MCF 10A (cell line): ENCODE measurements at regions of chr12 and their contacts with region 1.

Region 1: DNA sequence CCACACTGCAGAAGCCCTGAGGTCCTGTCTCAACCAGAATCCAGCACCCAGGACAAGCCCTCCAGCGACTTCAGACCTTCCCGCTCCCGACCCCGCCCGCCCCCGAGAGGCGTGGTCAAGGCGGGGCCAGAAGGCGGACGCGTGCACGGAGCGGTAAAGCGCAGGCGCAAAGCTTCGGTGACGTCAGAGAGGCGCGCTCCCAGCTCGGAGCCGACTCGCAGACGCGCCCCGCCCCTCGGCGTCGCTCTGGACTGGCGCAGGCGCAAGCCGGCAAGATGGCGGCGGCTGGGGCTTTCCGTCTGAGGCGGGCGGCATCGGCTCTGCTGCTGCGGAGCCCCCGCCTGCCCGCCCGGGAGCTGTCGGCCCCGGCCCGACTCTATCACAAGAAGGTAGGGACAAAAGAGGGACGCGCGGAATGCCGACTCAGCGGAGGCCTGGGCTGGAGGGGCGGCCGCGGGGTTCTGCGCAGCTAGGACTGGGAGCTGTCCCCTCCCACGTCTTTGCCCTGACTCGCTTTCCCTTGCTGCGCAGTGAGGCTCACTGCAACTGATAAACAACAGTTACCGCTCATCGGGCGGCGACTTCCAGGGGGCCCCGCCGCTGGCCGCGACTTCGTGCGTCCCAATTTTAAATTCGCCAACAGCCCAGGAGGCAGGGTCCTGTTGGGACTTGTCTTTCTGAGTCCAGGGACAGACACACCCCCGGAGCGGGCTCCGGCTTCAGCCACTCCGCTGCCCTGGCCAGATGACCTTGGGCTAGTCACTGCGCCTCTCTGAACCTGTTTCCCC is at the start of gene ISCU:
- DNase-seq: peak; percentile 98
- H3K4me3 Mint-ChIP-seq: peak within 1 kb of the TSS; percentile 96
- H3K27ac Mint-ChIP-seq: peak within 1 kb of the TSS; percentile 99
- H3K4me1 Mint-ChIP-seq: peaks cover 22% of the 10 kb centered on the region
- H3K27me3 Mint-ChIP-seq: no peaks in the 10 kb centered on the region
- CTCF ChIP-seq: no peak
- total RNA-seq, gene ISCU: 115 and 125 TPM in 2 replicates

Region 2: GRCh38 chr12:108612788-108613282 is 50.3 kb after region 1 on chr12:
- CTCF ChIA-PET with region 1: interaction called, 274 read pairs
- POLR2A ChIA-PET with region 1: interaction called, 105 read pairs
- intact Hi-C with region 1: loop called (anchors 1 kb)
- DNase-seq: peak; percentile 37
- H3K4me3 Mint-ChIP-seq: no peak overlapping the region
- H3K27ac Mint-ChIP-seq: no peak overlapping the region
- H3K4me1 Mint-ChIP-seq: peaks cover 6% of the 10 kb centered on the region
- H3K27me3 Mint-ChIP-seq: no peaks in the 10 kb centered on the region
- CTCF ChIP-seq: no peak

Region 3: GRCh38 chr12:108633534-108634248 is 71.1 kb after region 1 on chr12 and contains the start of gene SELPLG:
- CTCF ChIA-PET with region 1: interaction called, 6 read pairs
- POLR2A ChIA-PET with region 1: interaction called, 29 read pairs
- intact Hi-C with region 1: no loop called
- DNase-seq: no peak
- H3K4me3 Mint-ChIP-seq: no peak within 1 kb of the TSS
- H3K27ac Mint-ChIP-seq: no peak within 1 kb of the TSS
- H3K4me1 Mint-ChIP-seq: peaks cover 8% of the 10 kb centered on the region
- H3K27me3 Mint-ChIP-seq: no peaks in the 10 kb centered on the region
- CTCF ChIP-seq: no peak
- total RNA-seq, gene SELPLG: 0.86 and 1.2 TPM in 2 replicates

Region 4: DNA sequence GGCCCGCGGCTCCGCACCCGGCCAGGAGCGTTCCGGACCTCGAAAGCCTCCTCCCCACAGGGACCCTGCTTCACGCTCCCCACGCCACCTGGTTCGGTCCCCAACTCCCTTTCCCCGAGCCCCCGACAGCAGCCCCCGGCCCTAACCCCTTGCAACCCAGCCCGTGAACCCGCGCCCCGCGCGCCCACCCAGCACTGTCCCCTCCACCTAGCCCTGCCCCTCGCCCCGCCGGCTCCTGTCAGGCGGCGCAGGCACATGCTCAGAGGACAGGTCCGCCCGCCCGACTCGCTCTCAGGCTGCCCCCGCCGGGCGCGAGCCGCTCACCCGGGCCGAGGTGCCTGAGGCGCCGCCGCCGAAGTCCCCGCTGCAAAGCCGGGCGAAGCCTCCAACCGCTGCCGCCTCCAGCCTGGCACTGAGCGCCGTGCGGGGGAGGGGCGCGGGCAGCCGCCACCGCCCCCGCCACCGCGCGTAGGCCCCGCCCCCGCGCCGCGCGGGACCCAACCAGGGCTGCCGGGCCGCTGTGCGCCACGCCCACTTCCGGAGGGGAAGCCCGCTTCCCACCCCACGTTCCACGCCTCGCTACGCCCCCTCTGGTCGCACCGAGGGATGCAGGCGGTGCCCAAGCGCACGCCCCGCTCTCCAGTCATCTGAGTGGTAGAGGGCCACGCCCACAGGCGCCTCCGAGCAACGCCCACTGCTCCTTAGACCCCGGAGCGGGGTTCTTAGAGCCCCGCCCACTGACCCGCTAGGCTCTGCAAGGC is 168.7 kb after region 1 on chr12 and contains the start of gene CORO1C:
- CTCF ChIA-PET with region 1: interaction called, 3 read pairs
- POLR2A ChIA-PET with region 1: interaction called, 10 read pairs
- intact Hi-C with region 1: loop called (anchors 5 kb)
- DNase-seq: peak; percentile 96
- H3K4me3 Mint-ChIP-seq: peak within 1 kb of the TSS; percentile 90
- H3K27ac Mint-ChIP-seq: peak within 1 kb of the TSS; percentile 87
- H3K4me1 Mint-ChIP-seq: peaks cover 42% of the 10 kb centered on the region
- H3K27me3 Mint-ChIP-seq: no peaks in the 10 kb centered on the region
- CTCF ChIP-seq: peak; percentile 68
- total RNA-seq, gene CORO1C: 130 and 141 TPM in 2 replicates

Region 5: DNA sequence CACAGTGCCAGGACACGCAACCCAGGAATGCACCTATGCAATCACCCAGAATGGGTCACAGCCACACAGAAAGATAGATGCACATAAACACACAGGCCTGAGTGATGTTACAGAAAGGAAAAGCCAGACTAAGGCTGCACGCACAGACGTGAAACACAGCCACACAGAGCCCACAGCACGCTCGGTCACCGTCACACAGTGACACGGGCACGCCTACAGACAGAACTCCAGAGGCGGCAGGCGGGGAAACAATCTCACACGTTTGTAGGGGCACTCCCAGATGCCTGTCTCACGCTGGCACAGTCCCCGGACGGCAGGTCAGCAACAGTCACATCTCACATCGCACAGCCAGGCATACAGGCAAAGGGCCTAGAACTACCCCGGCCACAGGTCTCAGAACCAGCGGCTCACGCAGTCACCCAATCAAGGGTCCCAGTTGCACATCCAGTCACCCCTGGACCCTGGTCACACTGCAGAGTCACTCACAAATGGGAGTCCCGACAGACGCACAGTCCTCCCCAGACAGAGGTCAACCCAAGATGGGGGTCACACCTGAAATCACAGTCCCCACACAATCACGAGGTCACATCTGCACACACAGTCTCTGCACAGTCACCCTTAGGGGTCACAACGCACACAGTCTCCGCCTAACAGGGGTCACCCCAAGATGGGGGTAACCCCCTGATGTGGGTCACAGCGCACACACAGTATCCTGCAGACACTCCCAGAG is 294.1 kb after region 1 on chr12:
- CTCF ChIA-PET with region 1: no interaction called
- POLR2A ChIA-PET with region 1: interaction called, 26 read pairs
- intact Hi-C with region 1: loop called (anchors 2 kb)
- DNase-seq: peak; percentile 69
- H3K4me3 Mint-ChIP-seq: peak overlapping the region; percentile 91
- H3K27ac Mint-ChIP-seq: peak overlapping the region; percentile 92
- H3K4me1 Mint-ChIP-seq: peaks cover 33% of the 10 kb centered on the region
- H3K27me3 Mint-ChIP-seq: no peaks in the 10 kb centered on the region
- CTCF ChIP-seq: no peak

Region 6: GRCh38 chr12:108890212-108890611 is 327.7 kb after region 1 on chr12:
- CTCF ChIA-PET with region 1: no interaction called
- POLR2A ChIA-PET with region 1: no interaction called
- intact Hi-C with region 1: no loop called
- DNase-seq: peak; percentile 32
- H3K4me3 Mint-ChIP-seq: no peak overlapping the region
- H3K27ac Mint-ChIP-seq: no peak overlapping the region
- H3K4me1 Mint-ChIP-seq: no peaks in the 10 kb centered on the region
- H3K27me3 Mint-ChIP-seq: no peaks in the 10 kb centered on the region
- CTCF ChIP-seq: no peak

Region 7: GRCh38 chr12:109093022-109093918 is 530.7 kb after region 1 on chr12 and contains the start of gene ALKBH2:
- CTCF ChIA-PET with region 1: interaction called, 3 read pairs
- POLR2A ChIA-PET with region 1: interaction called, 5 read pairs
- intact Hi-C with region 1: loop called (anchors 1 kb)
- DNase-seq: peak; percentile 90
- H3K4me3 Mint-ChIP-seq: peak within 1 kb of the TSS; percentile 83
- H3K27ac Mint-ChIP-seq: peak within 1 kb of the TSS; percentile 85
- H3K4me1 Mint-ChIP-seq: peaks cover 23% of the 10 kb centered on the region
- H3K27me3 Mint-ChIP-seq: no peaks in the 10 kb centered on the region
- CTCF ChIP-seq: peak; percentile 88
- total RNA-seq, gene ALKBH2: 38.9 and 48.9 TPM in 2 replicates